ENCODE measurements at regions of chr6 and their contacts with region 1.

Region 1: GRCh38 chr6:11144393-11144851 is 32.9 kb upstream of the ERVFRD-1 start:
- DNase-seq: peak; percentile 90

Region 2: DNA sequence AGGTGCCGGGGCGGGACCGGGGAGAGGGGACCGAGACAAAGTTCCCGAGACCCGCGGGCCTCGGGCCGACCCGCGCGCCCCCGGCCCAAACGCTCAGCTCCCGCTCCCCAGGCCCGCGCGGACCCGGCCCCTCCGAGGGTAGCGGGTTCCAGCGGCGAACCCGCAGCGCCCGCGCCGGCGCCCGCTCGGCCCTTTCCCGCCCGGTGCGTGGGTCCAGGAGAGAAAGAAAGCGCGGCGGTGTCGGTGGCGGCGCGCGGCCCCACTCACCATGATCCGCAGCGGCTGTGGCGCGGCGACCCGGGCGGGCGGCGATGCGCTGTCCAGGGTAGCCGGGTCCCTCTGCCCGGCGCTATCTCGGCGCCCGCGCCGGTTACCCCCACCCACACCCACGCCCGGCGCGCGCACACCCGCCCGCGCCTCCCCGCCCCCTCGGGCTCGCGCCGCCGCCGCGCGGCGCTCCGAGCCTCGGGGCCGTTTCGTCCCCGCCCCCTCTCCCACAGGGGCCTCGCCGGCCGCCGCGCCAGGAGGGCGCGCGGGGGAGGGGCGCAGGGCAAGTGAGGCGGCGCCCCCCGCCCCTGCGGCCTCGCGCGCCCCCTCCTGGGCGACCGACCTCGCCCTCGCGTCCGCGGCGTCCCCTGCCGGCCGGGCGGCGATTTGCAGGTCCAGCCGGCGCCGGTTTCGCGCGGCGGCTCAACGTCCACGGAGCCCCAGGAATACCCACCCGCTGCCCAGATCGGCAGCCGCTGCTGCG is 100.3 kb before region 1 on chr6 and contains the start of gene ELOVL2:
- intact Hi-C with region 1: no loop called
- DNase-seq: no peak
- total RNA-seq, gene ELOVL2: 0.23 to 0.38 TPM

Region 3: DNA sequence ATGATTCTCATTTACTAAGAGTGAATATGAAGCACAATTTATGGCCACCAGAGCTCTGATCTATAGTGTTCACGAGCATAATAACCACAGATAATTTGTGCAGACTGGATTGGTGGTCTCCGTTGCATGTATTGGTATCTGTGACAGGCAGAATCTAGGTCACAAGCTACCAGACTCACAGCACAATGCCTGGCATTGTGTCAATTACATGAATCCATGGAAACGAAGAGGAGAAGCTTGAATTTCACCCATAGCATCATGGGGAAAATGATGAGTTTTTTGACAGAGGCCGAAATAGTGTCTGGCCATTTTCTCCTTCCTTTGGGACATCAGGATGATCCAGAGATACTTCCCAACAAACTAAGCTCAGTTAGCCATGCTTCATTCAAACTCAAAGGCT is 340.8 kb after region 1 on chr6:
- intact Hi-C with region 1: loop called in 1 of 2 experiments (anchors 5 kb)
- DNase-seq: no peak

Region 4: GRCh38 chr6:11563793-11564192 is 419.4 kb after region 1 on chr6:
- intact Hi-C with region 1: loop called in 1 of 2 experiments (anchors 10 kb)
- DNase-seq: no peak